ENCODE measurements at regions of chr1 and their contacts with region 1.

Region 1: GRCh38 chr1:44377925-44378784 is 23.1 kb upstream of the ERI3 start:
- DNase-seq: peak; percentile 85 to 87
- H3K4me3 ChIP-seq: no peak overlapping the region
- H3K4me1 ChIP-seq: no peaks in the 10 kb centered on the region
- H3K27me3 ChIP-seq: no peaks in the 10 kb centered on the region

Region 2: GRCh38 chr1:44021581-44022321 is 356.4 kb before region 1 on chr1:
- in situ Hi-C with region 1: no loop called
- DNase-seq: no peak
- H3K4me3 ChIP-seq: no peak overlapping the region
- H3K4me1 ChIP-seq: no peaks in the 10 kb centered on the region
- H3K27me3 ChIP-seq: no peaks in the 10 kb centered on the region

Region 3: GRCh38 chr1:44594871-44595746 is 217.0 kb after region 1 on chr1:
- in situ Hi-C with region 1: loop called (anchors 5 kb)
- DNase-seq: peak; percentile 43 to 93
- H3K4me3 ChIP-seq: no peak overlapping the region
- H3K4me1 ChIP-seq: peaks cover 3% of the 10 kb centered on the region; the same call in 1 of the 2 replicates
- H3K27me3 ChIP-seq: no peaks in the 10 kb centered on the region

Measured in HAP-1 (cell line).